PC-3 (cell line): ENCODE measurements at regions of chr14 and their contacts with region 1.

Region 1: DNA sequence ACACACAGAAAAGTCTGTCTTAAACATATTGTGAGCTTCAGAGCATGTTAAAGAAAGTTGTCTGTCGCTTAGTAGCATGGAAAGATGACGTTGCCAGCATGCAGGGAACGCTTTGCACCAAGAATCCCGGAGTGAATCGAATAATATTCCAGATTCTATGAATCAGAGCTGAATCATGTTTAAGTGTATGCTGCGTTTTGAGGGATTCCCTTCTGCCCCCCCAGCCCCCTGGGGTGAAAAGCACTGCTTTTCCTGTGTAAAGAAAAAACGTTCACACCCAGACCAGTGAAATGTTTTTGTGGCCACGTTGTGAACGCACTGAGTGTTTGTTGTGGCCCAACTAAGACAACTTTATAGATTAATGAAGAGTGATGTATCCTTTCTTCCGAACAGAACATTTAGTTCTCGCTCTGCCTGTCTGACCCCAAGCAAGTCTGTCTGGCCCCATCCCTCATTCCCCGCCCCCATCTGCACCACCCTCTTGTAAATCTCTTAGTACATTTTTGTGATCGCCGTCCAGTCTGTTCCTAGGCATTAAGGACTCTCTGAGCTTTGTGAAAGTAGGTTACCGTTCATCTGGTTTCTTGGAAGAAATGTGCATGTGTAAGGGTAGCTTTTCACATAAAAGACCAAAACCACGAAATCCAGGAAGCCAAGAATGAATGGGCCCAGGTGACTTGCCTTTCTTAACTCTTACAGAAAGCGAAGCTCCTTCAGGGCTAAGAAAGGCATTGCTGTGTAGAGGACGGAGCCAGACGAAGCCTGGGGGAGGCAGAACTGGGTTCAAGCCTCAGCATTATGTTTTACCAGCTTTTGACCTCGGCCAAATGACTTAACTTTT is 103.0 kb downstream of the SAMD4A start:
- DNase-seq: peak; percentile 99
- ATAC-seq: peak; percentile 77
- H3K4me3 ChIP-seq: peak overlapping the region; percentile 34
- H3K27ac ChIP-seq: peak overlapping the region; percentile 81
- H3K4me1 ChIP-seq: peaks cover 56% of the 10 kb centered on the region
- H3K27me3 ChIP-seq: no peaks in the 10 kb centered on the region
- CTCF ChIP-seq: no peak

Region 2: DNA sequence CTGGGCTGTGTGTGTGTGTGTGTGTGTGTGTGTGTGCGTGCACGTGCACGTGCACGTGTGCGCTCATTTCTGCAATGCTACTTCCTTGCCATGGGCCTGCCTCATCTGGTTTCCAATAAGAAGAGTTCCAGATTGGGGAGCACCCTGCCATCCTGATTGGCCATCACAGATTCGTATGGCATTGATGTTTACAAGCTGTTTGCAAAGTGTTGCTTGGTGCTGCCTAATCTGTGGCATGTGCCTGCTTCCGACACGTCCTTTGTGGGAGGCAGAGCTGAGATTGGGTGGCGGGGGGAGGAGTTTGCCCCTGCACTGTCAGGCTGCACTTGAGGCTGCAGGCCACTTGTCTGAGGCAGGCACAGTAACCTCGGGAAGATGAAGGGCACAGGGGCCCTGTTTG is 63.8 kb before region 1 on chr14:
- CTCF ChIA-PET with region 1: interaction called, 10 read pairs
- POLR2A ChIA-PET with region 1: no interaction called
- intact Hi-C with region 1: no loop called
- DNase-seq: no peak
- ATAC-seq: no peak
- H3K4me3 ChIP-seq: no peak overlapping the region
- H3K27ac ChIP-seq: no peak overlapping the region
- H3K4me1 ChIP-seq: peaks cover 34% of the 10 kb centered on the region
- H3K27me3 ChIP-seq: no peaks in the 10 kb centered on the region
- CTCF ChIP-seq: no peak

Region 3: GRCh38 chr14:54691525-54692283 is 21.8 kb after region 1 on chr14:
- CTCF ChIA-PET with region 1: interaction called, 6 read pairs
- POLR2A ChIA-PET with region 1: interaction called, 8 read pairs
- intact Hi-C with region 1: loop called (anchors 1 kb)
- DNase-seq: peak; percentile 97
- ATAC-seq: peak; percentile 98
- H3K4me3 ChIP-seq: no peak overlapping the region
- H3K27ac ChIP-seq: peak overlapping the region; percentile 3; the same call in 1 of the 2 replicates
- H3K4me1 ChIP-seq: peaks cover 5% of the 10 kb centered on the region
- H3K27me3 ChIP-seq: no peaks in the 10 kb centered on the region
- CTCF ChIP-seq: peak; percentile 100

Region 4: DNA sequence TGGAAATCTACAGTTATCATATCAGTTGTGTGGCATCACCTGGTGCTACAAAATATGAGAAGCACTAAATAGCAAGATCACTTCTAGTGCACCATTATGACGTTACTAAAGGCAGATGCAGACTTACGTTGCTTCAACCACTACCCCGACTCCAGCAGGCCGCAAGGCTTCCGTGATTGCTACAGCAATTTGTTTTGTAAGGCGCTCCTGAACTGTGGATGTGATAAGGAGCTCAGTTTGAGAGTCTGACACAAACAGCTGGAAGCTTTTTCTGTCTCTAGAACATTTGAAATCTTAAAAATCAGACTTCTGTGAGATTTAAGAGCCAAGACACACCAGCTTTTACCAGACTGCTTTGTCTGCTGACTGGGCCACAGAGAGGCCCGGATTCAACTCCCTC is 175.7 kb after region 1 on chr14:
- CTCF ChIA-PET with region 1: no interaction called
- POLR2A ChIA-PET with region 1: no interaction called
- intact Hi-C with region 1: no loop called
- DNase-seq: no peak
- ATAC-seq: no peak
- H3K4me3 ChIP-seq: no peak overlapping the region
- H3K27ac ChIP-seq: no peak overlapping the region
- H3K4me1 ChIP-seq: no peaks in the 10 kb centered on the region
- H3K27me3 ChIP-seq: no peaks in the 10 kb centered on the region
- CTCF ChIP-seq: no peak